ENCODE measurements at regions of chr11 and their contacts with region 1.

Region 1: GRCh38 chr11:38411149-38411548 is 1813.1 kb upstream of the RAG2 start:
- DNase-seq: no peak
- H3K4me3 ChIP-seq: no peak overlapping the region
- H3K27ac ChIP-seq: no peak overlapping the region
- H3K4me1 ChIP-seq: no peaks in the 10 kb centered on the region
- H3K27me3 ChIP-seq: no peaks in the 10 kb centered on the region
- CTCF ChIP-seq: no peak
- POLR2A ChIP-seq: no peak

Region 2: DNA sequence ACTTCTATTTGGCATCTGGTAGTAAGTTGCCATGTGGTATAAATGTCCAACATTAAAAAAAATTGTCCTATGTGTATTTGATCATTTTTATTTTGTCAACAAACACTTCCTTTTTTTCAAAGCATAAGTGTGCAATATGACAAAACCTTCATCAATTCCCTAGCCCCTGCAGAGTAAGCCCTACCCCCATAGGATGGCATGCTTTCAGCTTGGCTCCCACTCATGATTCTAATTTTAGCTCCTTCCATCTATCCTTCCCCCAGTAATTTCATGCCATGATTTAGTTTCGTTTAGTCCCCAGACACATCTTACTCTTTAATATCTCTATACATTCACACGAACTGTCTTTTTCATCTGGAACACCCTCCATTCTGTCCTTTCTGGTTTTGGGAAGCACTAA is 1562.5 kb before region 1 on chr11:
- intact Hi-C with region 1: loop called (anchors 5 kb)
- DNase-seq: no peak
- H3K4me3 ChIP-seq: no peak overlapping the region
- H3K27ac ChIP-seq: no peak overlapping the region
- H3K4me1 ChIP-seq: no peaks in the 10 kb centered on the region
- H3K27me3 ChIP-seq: no peaks in the 10 kb centered on the region
- CTCF ChIP-seq: no peak
- POLR2A ChIP-seq: no peak

Region 3: GRCh38 chr11:39741066-39741465 is 1329.9 kb after region 1 on chr11:
- intact Hi-C with region 1: loop called (anchors 5 kb)
- DNase-seq: no peak
- H3K4me3 ChIP-seq: no peak overlapping the region
- H3K27ac ChIP-seq: no peak overlapping the region
- H3K4me1 ChIP-seq: no peaks in the 10 kb centered on the region
- H3K27me3 ChIP-seq: no peaks in the 10 kb centered on the region
- CTCF ChIP-seq: no peak
- POLR2A ChIP-seq: no peak

Measured in breast epithelium (tissue), 4 donors.